A549 (cell line): ENCODE measurements at regions of chr17 and their contacts with region 1.

Region 1: DNA sequence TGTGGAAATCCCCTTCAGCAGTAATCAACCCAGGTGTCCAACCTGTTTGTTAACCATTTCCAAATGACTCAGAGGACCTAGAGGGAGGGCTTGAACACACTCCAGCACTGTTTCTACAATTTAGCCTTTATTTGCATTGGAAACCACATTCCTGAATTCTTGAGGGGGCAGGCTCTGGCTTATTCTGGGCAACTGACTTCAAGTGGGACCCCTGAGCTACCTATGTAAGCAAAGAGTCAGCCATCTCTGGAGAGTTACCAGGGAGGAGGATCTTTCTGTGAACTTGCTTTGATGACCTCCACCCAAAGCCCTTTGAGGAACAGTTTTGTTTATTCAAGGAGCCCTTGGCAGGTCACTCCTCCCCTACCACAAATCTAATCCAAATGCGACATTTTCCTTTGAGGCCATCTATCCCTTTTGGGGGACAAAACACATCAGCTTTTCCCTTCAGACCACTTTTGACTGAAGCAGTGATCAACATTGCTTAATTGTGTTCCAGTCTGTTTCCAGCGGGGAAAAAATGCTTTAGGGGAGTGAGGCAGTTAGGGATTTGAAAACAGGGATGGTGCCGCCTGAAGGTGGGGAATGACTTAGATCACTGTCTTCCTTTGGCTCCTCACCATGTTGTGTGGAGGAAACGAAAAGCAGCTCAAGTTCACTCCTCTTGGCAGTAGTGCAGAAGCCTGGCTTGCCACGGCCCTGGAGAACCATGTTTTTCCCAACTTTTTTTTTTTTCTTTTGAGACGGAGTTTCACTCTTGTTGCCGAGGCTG is 46.2 kb downstream of the TUBD1 start:
- DNase-seq: peak; percentile 84 to 99
- ATAC-seq: peak; percentile 30 to 31
- H3K4me3 ChIP-seq: no peak overlapping the region
- H3K27ac ChIP-seq: peak overlapping the region; percentile 91 to 96
- H3K4me1 ChIP-seq: peaks cover 69% of the 10 kb centered on the region
- CTCF ChIP-seq: no peak
- EP300 ChIP-seq: peak; percentile 99
- POLR2A ChIP-seq: no peak
- RAD21 ChIP-seq: peak; percentile 48 to 56; a peak in 4 of 5 replicates

Region 2: GRCh38 chr17:59753522-59754467 is 92.8 kb before region 1 on chr17:
- CTCF ChIA-PET with region 1: interaction called, 244 read pairs
- POLR2A ChIA-PET with region 1: interaction called, 531 read pairs
- DNase-seq: peak; percentile 81 to 94
- ATAC-seq: peak; percentile 49 to 65
- H3K4me3 ChIP-seq: no peak overlapping the region
- H3K27ac ChIP-seq: peak overlapping the region; percentile 95
- H3K4me1 ChIP-seq: peaks cover 92% of the 10 kb centered on the region
- CTCF ChIP-seq: peak; percentile 98
- EP300 ChIP-seq: no peak
- POLR2A ChIP-seq: no peak
- RAD21 ChIP-seq: peak; percentile 97 to 98

Region 3: DNA sequence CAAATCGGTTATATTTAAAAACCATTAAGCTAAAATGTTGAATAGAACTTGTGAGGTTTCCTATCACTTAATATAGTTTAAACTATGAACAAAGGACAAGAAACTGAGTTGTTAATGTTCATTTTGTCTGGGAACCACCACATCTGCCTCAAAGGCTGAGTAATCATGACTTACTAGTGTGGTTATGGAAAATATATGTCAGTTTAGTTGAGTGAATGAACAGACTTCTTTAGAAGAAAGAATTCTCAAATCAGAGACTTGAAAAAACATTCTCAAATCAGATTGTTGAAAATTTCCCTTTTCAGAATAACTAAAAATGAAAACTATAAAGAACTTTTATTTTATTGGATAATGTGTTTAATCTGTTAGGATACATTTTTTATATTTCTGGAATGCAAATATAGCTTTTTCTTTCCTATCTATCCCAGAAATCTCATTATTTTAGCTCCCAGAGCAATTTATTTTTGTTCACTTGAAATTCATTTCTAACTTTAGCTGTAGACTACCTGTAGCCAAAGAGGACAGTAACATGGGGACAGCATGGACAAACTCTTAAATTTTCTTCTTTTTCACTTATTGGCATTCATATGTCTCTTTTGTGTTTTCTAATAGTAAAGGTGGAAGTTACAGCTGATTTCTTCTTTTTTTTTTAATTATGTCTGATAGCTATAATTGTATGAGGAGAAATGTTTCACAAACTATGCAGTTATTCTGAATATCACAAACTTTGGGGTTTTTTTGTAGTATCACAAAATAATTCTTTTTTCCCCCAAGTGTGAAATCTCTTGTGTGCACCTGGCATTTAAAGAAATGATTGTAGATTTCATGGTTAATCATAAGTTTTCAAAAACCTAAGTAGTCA is 83.8 kb before region 1 on chr17:
- CTCF ChIA-PET with region 1: interaction called, 3 read pairs
- POLR2A ChIA-PET with region 1: interaction called, 18 read pairs
- DNase-seq: peak in 1 of 2 experiments; percentile 59
- ATAC-seq: 0 out of 6 replicates have a peak, but pooled peaks of 1 of the 2 experiments have one; percentile 12
- H3K4me3 ChIP-seq: no peak overlapping the region
- H3K27ac ChIP-seq: peak overlapping the region; percentile 94 to 95
- H3K4me1 ChIP-seq: peaks cover 56% of the 10 kb centered on the region
- CTCF ChIP-seq: no peak
- EP300 ChIP-seq: no peak
- POLR2A ChIP-seq: no peak
- RAD21 ChIP-seq: no peak

Region 4: GRCh38 chr17:59769891-59770290 is 76.7 kb before region 1 on chr17:
- CTCF ChIA-PET with region 1: no interaction called
- POLR2A ChIA-PET with region 1: interaction called, 11 read pairs
- DNase-seq: no peak
- ATAC-seq: no peak
- H3K4me3 ChIP-seq: no peak overlapping the region
- H3K27ac ChIP-seq: peak overlapping the region; percentile 71 to 76; a peak in 4 of 6 replicates
- H3K4me1 ChIP-seq: peaks cover 53% of the 10 kb centered on the region
- CTCF ChIP-seq: no peak
- EP300 ChIP-seq: no peak
- POLR2A ChIP-seq: no peak
- RAD21 ChIP-seq: no peak

Region 5: DNA sequence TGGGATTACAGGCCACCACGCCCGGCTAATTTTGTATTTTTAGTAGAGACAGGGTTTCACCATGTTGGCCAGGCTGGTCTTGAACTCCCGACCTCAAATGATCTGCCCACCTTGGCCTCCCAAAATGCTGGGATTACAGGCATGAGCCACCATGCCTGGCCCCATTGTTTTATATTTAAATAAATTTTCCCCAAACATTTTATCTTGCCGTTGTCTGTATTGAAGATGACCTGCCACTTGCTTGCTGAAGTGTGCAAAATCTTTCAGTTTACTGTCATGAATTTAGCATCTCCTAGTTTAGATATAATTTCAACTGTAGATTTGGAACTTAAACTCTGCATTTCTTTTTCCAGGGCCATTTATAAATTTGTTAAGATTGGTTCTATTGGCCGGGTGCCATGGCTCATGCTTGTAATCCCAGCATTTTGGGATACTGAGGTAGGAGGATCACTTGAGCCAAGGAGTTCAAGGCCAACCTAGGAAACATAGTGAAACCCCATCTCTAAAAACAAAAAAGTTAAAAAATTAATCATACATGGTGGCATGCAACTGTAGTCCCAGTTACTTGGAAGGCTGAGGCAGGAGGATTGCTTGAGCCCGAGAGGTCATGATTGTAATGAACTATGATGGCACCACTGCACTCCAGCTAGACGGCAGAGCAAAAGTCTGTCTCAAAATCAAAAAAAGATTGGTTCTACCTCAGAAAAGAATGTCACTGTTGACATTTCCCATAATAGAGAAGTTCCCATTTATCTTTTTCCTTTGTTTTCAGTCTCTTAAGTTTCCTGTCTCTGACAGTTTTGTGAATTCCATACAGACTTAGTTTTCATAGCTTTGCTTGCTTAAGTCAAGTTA is 54.8 kb before region 1 on chr17:
- CTCF ChIA-PET with region 1: interaction called, 4 read pairs
- POLR2A ChIA-PET with region 1: interaction called, 610 read pairs
- DNase-seq: peak in 1 of 2 experiments; percentile 95
- ATAC-seq: peak; percentile 62 to 86; a peak in 4 of 6 replicates
- H3K4me3 ChIP-seq: no peak overlapping the region
- H3K27ac ChIP-seq: peak overlapping the region; percentile 94 to 98
- H3K4me1 ChIP-seq: peaks cover 67% of the 10 kb centered on the region
- CTCF ChIP-seq: no peak
- EP300 ChIP-seq: peak; percentile 83 to 89; a peak in 4 of 5 replicates
- POLR2A ChIP-seq: no peak
- RAD21 ChIP-seq: 0 out of 5 replicates have a peak, but pooled peaks have one; percentile 26 to 29

Region 6: GRCh38 chr17:59804901-59805465 is 41.6 kb before region 1 on chr17:
- CTCF ChIA-PET with region 1: interaction called, 3 read pairs
- POLR2A ChIA-PET with region 1: interaction called, 127 read pairs
- DNase-seq: peak in 1 of 2 experiments; percentile 89
- ATAC-seq: peak in 1 of 2 experiments; percentile 29; a peak in 3 of 6 replicates
- H3K4me3 ChIP-seq: peak overlapping the region; percentile 4; the same call in 1 of the 3 replicates
- H3K27ac ChIP-seq: peak overlapping the region; percentile 90 to 92
- H3K4me1 ChIP-seq: peaks cover 85% of the 10 kb centered on the region
- CTCF ChIP-seq: no peak
- EP300 ChIP-seq: no peak
- POLR2A ChIP-seq: no peak
- RAD21 ChIP-seq: no peak

Region 7: GRCh38 chr17:59892924-59893676 is 46.5 kb after region 1 on chr17 and contains the starts of genes RPS6KB1 and TUBD1:
- CTCF ChIA-PET with region 1: interaction called, 3 read pairs
- POLR2A ChIA-PET with region 1: interaction called, 12 read pairs
- DNase-seq: peak; percentile 99 to 100
- ATAC-seq: peak; percentile 96 to 97
- H3K4me3 ChIP-seq: peak within 1 kb of the TSS; percentile 81
- H3K27ac ChIP-seq: peak within 1 kb of the TSS; percentile 93
- H3K4me1 ChIP-seq: peaks cover 39% of the 10 kb centered on the region
- CTCF ChIP-seq: no peak
- EP300 ChIP-seq: no peak
- POLR2A ChIP-seq: peak; percentile 97
- RAD21 ChIP-seq: no peak
- polyA plus RNA-seq, gene RPS6KB1: 53.7 and 57.3 TPM in 2 replicates
- polyA plus RNA-seq, gene TUBD1: 24.4 and 28.3 TPM in 2 replicates

Region 8: DNA sequence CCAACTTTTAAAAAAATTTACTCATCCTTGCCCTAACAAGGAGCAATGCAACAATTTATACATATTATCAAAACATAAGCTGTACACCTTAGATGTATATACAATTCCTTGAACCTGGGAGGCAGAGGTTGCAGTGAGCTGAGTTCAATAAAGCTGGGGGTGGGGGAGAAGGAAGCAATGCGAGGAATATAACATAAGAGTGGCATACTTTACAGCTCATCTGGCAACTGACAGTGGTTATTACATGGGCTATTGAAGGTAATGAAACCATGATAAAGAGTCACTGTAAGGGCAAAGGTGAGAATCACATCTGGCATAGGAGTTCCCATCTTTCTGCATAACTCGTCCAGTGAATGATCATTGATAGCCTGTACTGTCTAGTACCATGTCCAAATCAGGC is 346.9 kb after region 1 on chr17:
- CTCF ChIA-PET with region 1: no interaction called
- POLR2A ChIA-PET with region 1: no interaction called
- DNase-seq: no peak
- ATAC-seq: no peak
- H3K4me3 ChIP-seq: no peak overlapping the region
- H3K27ac ChIP-seq: no peak overlapping the region
- H3K4me1 ChIP-seq: no peaks in the 10 kb centered on the region
- CTCF ChIP-seq: no peak
- EP300 ChIP-seq: no peak
- POLR2A ChIP-seq: no peak
- RAD21 ChIP-seq: no peak